K562 (cell line): ENCODE measurements at regions of chr12 and their contacts with region 1.

Region 1: DNA sequence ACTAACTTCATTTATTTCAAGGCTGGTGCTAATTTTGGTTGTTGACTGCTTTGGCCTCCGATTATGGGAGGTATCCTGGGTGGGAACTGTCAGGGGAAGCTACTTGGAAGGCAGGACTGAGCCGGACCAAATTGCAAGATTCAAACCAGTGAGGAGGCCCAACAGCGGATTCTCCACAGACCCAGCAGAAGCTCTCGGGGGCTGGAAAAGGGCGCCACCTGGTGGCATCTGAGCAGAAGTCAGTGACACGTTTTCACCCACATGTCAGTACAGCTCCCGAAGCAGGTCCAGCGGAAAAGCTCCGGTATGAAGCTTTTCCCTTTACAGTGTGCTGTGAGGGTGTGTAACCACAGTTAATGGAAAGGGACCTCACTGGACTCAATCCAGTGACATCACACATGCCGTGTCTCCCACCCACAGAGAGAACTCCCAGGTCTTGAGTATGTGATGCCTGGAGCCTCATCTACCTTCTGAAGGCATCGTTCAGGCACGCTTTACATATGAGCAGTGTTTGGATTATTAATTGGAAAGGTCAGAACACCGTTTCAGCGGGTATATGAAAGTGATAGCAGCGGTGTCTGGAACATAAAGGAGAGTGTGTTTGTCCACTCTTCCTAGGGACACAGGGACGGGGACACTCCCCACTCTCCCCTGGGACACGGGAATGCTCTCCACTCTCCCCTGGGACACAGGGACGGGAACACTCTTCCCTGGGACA is 3.6 kb upstream of the P2RX2 start:
- DNase-seq: peak; percentile 77 to 90 (median 78)
- ATAC-seq: peak; percentile 96
- H3K4me3 ChIP-seq: no peak overlapping the region
- H3K27ac ChIP-seq: no peak overlapping the region
- H3K4me1 ChIP-seq: peaks cover 0 to 16% of the 10 kb centered on the region in 2 experiments; a peak in 2 of 5 replicates
- H3K27me3 ChIP-seq: peaks cover 19 to 25% of the 10 kb centered on the region in 2 experiments; a peak in 4 of 5 replicates
- CTCF ChIP-seq: peak; percentile 92 to 93 (median 93)
- EP300 ChIP-seq: no peak
- POLR2A ChIP-seq: no peak
- RAD21 ChIP-seq: peak; percentile 69 to 94

Region 2: GRCh38 chr12:132600048-132601032 is 14.7 kb before region 1 on chr12:
- CTCF ChIA-PET with region 1: interaction called, 9 read pairs
- POLR2A ChIA-PET with region 1: interaction called, 5 read pairs
- in situ Hi-C with region 1: no loop called
- intact Hi-C with region 1: loop called (anchors 1 kb)
- DNase-seq: peak; percentile 73 to 83 (median 79)
- ATAC-seq: peak; percentile 96
- H3K4me3 ChIP-seq: peak overlapping the region; percentile 36
- H3K27ac ChIP-seq: no peak overlapping the region
- H3K4me1 ChIP-seq: peaks cover 7 to 67% of the 10 kb centered on the region in 2 experiments; a peak in 4 of 5 replicates
- H3K27me3 ChIP-seq: peaks cover 29 to 51% of the 10 kb centered on the region in 2 experiments
- CTCF ChIP-seq: peak; percentile 85 to 98 (median 90)
- EP300 ChIP-seq: no peak
- POLR2A ChIP-seq: 0 out of 2 replicates have a peak, but pooled peaks have one; percentile 31
- RAD21 ChIP-seq: peak; percentile 40 to 83